Activated naive CD4-positive, alpha-beta T cell treated with anti-CD3 and anti-CD28 coated beads for 36 hours (primary cell): ENCODE measurements at regions of chr6 and their contacts with region 1.

Region 1: DNA sequence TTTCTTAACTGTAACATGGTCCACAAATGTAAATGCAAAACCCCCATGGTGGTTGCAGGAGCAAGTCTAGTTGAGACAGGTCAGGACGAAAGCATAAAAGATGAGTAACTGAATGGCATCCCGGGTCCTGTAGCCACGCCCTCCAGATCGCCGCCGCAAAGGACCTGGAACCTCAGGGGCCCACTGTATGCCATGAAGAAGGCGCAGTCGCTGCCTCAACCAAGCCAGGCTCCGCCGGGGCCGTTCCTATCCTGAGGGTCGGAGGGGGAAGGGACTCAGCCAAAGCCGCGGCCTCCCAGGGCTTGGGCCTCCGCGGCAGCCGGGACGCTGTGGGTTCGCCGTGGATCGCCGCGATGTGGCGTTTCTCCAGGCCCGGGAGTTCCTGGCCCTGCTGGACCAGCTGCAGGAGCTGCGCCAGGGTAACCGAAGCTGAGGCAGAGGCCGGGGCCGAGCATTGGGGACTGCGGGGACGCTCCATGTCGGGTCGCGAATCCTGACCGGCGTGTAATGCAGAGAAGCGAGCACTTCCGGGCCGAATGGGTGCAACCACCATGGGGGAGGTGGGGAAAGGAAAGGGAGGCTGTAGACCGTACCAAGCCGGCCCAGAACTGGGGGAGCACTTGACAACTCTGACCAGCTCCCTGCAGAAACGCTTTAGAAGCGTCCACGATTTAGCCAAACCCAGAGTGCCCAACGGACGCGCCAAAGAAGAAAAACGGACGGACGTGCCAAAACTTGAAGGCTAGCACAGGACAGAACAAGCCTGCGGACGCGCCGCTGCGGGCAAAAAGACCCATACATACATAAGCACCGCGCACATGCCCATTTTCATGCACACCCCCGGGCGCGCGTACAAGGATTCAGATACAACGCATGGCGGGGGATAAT is 11.1 kb downstream of the RPL7L1 start:
- DNase-seq: peak; percentile 96
- H3K4me3 Mint-ChIP-seq: peak overlapping the region; percentile 82
- H3K27ac Mint-ChIP-seq: peak overlapping the region; percentile 95
- H3K4me1 Mint-ChIP-seq: peaks cover 32% of the 10 kb centered on the region
- H3K27me3 Mint-ChIP-seq: no peaks in the 10 kb centered on the region

Region 2: DNA sequence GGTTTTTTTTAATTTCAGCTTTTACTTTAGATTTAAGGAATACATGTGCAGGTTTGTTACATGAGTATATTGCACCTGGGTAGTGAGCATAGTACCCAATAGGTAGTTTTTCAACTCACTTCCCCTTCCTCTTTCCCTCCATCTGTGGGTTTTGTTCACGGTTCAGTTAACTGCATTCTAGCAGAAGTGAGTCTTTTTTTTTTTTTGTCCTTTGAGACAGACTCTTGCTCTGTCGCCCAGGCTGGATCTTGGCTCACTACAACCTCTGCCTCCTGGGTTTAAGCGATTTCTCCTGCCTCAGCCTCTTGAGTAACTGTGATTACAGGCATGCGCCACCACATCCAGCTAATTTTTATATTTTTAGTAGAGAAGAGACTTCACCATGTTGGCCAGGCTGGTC is 318.0 kb before region 1 on chr6:
- CTCF ChIA-PET with region 1: no interaction called
- intact Hi-C with region 1: loop called (anchors 5 kb)
- DNase-seq: no peak
- H3K4me3 Mint-ChIP-seq: no peak overlapping the region
- H3K27ac Mint-ChIP-seq: no peak overlapping the region
- H3K4me1 Mint-ChIP-seq: peaks cover 49% of the 10 kb centered on the region
- H3K27me3 Mint-ChIP-seq: no peaks in the 10 kb centered on the region

Region 3: DNA sequence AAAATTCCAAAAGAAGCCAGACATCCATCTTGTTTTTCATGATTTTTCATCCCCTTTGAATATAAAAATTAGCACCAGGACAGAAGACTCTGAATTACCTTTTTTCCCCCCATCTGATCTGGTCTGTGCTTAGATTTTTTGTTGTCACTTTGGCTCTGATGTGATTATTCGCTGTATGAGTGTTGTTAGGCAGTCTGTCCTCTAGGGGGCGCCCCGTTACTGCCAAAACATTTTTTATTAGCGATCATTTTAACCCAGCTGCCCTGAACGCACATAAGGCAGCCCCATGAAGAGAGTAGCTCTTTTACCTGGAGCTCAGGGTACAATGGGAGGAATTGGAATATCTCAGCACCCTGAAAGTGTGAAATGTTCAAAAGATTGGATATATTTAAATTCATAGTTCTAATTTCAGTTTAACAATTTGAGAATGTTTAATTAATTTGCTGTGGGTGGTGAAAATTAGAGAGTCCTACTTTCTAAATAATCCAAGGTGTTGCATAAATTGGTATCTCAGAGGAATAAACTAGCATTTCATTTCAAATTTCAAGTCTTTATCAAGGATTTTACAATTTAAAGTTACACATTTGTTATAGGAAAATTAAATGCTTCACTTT is 228.9 kb before region 1 on chr6:
- CTCF ChIA-PET with region 1: interaction called, 14 read pairs
- intact Hi-C with region 1: no loop called
- DNase-seq: peak; percentile 92
- H3K4me3 Mint-ChIP-seq: no peak overlapping the region
- H3K27ac Mint-ChIP-seq: no peak overlapping the region
- H3K4me1 Mint-ChIP-seq: no peaks in the 10 kb centered on the region
- H3K27me3 Mint-ChIP-seq: no peaks in the 10 kb centered on the region

Region 4: DNA sequence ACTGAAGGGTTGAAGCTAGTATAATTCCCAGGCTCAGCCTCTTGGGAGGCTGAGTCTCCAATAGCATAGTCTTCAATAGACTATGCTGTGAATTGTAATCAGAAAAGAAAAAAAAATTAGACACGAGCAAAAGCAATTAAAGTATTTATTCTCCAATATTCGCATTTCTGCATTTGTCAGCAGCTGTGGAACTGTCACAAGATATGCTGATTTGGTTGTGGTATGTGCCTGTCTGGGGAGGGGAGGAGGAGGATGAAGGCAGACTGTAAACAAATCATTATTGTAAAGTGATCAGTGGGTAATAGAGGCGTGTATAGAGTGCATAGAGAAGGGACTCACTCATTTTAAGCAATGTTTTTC is 118.8 kb before region 1 on chr6:
- CTCF ChIA-PET with region 1: no interaction called
- intact Hi-C with region 1: loop called (anchors 1 kb)
- DNase-seq: no peak
- H3K4me3 Mint-ChIP-seq: peak overlapping the region; percentile 71
- H3K27ac Mint-ChIP-seq: peak overlapping the region; percentile 96
- H3K4me1 Mint-ChIP-seq: peaks cover 62% of the 10 kb centered on the region
- H3K27me3 Mint-ChIP-seq: no peaks in the 10 kb centered on the region

Region 5: DNA sequence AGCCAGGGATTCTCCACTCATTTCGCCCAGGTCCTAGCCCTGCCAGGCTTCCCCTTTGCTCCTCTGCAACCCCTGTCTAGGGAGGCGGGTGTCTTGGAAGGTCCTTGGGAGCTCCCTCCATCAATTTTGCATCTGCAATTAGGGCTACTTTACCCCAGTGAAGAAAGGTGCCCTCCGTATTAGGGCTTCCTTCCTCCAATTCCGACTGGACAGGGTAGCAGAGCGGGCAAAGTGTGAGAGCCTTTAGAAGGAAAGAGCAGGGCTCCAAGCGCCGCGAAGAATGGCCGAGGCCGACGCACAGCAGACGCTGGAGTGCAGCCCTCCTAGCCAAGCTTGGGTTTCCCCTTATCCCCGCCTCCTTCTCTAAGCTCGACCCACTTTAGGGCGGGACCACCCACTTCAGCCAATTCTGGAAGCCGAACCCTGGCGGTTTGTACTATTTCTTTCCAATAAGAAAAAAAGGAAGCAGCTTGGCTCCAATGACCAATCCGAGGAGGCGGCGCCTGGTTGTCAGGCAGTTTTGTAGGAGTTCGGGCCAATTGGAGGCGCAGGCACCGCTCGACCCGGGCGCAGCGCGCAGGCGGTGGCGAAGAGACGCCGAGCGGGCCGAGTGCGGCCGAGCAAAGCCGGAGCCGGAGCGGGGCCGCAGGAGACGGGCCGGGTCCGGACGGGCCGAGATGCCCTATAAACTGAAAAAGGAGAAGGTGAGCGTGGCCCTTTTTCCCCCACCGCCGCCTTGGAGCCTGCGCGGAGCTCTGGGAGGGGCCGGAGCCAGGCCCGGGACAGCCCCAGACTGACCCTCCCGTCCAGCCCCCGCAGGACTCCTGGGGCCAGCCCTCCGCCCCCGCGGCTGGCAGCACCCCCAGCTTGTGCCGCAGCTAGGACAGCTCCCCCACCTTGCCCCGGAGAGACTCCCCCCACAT is 93.7 kb after region 1 on chr6 and contains the start of gene PPP2R5D:
- CTCF ChIA-PET with region 1: no interaction called
- intact Hi-C with region 1: no loop called
- DNase-seq: peak; percentile 99
- H3K4me3 Mint-ChIP-seq: peak within 1 kb of the TSS; percentile 93
- H3K27ac Mint-ChIP-seq: peak within 1 kb of the TSS; percentile 81
- H3K4me1 Mint-ChIP-seq: peaks cover 51% of the 10 kb centered on the region
- H3K27me3 Mint-ChIP-seq: no peaks in the 10 kb centered on the region
- total RNA-seq, gene PPP2R5D: 52.4 to 54.4 TPM